H1 (cell line): ENCODE measurements at regions of chr4 and their contacts with region 1.

Region 1: GRCh38 chr4:104860238-104861123 is 286.2 kb upstream of the TET2 start:
- DNase-seq: peak; percentile 36 to 70
- H3K4me3 ChIP-seq: no peak overlapping the region
- H3K27ac ChIP-seq: no peak overlapping the region
- H3K4me1 ChIP-seq: peaks cover 0 to 4% (median 0%) of the 10 kb centered on the region in 4 experiments; a peak in 2 of 7 replicates
- H3K27me3 ChIP-seq: no peaks in the 10 kb centered on the region
- CTCF ChIP-seq: peak in 2 of 3 experiments; percentile 67 to 83; a peak in 3 of 4 replicates
- EP300 ChIP-seq: no peak
- POLR2A ChIP-seq: no peak
- RAD21 ChIP-seq: peak; percentile 92 to 94

Region 2: DNA sequence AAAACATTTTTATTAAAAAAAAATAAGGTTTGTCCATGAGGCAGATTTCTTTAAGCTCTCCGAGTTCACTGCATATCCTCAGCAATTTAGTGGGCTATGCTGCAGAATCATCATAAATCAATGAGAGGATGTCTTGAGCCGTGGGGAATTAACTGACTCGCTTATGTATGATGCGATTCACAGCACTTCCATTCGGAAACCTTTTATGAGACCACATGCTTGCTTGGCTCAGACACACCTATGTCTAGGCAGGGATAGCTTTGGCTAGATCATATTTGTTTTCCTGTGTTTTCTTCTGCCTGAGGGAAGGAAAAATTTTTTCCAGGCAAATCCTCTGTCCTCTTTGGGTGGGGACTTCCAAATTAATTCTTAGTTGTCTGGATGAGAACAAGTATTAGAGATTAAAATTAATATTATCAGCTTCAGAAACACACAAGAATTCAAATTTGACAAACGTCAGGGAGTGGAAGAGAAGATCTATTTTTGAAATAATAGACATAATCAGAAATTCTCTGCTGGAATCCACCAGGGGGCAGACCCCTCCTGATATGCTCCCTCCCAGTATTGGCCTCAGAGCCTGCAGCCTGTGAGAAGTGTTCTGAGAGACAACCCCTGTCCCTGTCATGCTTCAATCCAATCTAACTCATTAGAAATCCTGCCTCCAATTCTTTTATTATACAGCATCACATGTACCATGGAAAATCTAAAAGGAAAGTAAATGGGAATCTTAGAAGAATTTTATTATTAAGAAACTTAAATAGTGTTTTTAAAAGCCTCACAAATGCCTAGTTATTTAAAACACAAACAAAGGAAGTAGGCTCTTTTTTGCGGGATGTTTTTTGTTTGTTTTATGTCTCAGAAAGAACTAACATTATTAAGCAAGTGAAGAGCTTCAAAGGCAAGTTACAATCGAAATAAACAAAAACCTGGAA is 795.6 kb before region 1 on chr4:
- CTCF ChIA-PET with region 1: interaction called, 28 read pairs
- POLR2A ChIA-PET with region 1: no interaction called
- DNase-seq: peak; percentile 3 to 53
- H3K4me3 ChIP-seq: no peak overlapping the region
- H3K27ac ChIP-seq: no peak overlapping the region
- H3K4me1 ChIP-seq: no peaks in the 10 kb centered on the region
- H3K27me3 ChIP-seq: no peaks in the 10 kb centered on the region
- CTCF ChIP-seq: peak; percentile 44 to 59 (median 57)
- EP300 ChIP-seq: no peak
- POLR2A ChIP-seq: no peak
- RAD21 ChIP-seq: peak; percentile 82 to 83

Region 3: GRCh38 chr4:104500442-104500841 is 360.0 kb before region 1 on chr4:
- CTCF ChIA-PET with region 1: interaction called, 10 read pairs
- POLR2A ChIA-PET with region 1: no interaction called
- DNase-seq: no peak
- H3K4me3 ChIP-seq: no peak overlapping the region
- H3K27ac ChIP-seq: no peak overlapping the region
- H3K4me1 ChIP-seq: no peaks in the 10 kb centered on the region
- H3K27me3 ChIP-seq: no peaks in the 10 kb centered on the region
- CTCF ChIP-seq: no peak
- EP300 ChIP-seq: no peak
- POLR2A ChIP-seq: no peak
- RAD21 ChIP-seq: no peak

Region 4: DNA sequence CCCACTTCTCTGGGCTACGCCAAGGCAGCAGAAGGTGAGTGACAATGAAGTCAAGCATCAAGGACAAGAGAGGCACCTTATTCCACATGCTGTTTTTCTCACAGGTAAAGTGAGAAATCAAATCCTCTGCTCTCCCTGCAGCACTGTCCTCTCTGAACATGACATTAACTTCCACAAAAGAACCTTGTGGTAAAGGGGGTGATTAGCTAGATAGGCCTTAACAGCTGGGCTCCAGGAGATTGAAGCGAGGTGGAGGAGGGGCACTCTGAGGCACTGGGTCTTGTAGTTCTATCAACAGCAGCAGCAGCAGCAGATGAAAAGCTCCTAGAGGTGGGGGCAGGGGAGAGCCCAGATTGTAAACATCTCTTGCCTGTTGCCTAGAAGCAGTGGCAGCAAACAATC is 269.0 kb before region 1 on chr4:
- CTCF ChIA-PET with region 1: interaction called, 13 read pairs
- POLR2A ChIA-PET with region 1: no interaction called
- DNase-seq: peak; percentile 56 to 62
- H3K4me3 ChIP-seq: peak overlapping the region in 1 of 4 experiments; percentile 27; a peak in 1 of 8 replicates
- H3K27ac ChIP-seq: peak overlapping the region; percentile 54
- H3K4me1 ChIP-seq: peaks cover 0 to 3% (median 2%) of the 10 kb centered on the region in 4 experiments; a peak in 4 of 7 replicates
- H3K27me3 ChIP-seq: no peaks in the 10 kb centered on the region
- CTCF ChIP-seq: no peak
- EP300 ChIP-seq: peak in 1 of 2 experiments; percentile 70; a peak in 1 of 3 replicates
- POLR2A ChIP-seq: no peak
- RAD21 ChIP-seq: peak; percentile 19 to 21; a peak in 2 of 4 replicates

Region 5: DNA sequence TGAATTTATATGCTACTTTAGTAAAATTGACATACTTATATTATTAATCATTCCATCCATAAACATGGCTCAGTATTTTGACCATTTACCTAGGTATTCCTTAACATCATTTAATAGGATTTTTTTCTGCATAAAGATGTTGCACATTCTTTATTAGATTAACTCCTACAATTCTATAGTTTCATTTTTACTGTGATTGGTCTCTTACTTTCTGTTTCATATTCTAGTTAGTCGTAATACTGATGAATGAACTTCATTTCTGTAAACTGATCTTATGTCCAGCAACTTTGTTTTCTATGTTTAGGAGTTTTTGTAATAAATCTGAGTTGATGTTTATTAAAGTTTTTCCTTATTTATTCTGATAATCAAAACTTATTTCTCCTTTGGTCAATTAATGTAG is 87.6 kb before region 1 on chr4:
- CTCF ChIA-PET with region 1: no interaction called
- POLR2A ChIA-PET with region 1: no interaction called
- DNase-seq: no peak
- H3K4me3 ChIP-seq: no peak overlapping the region
- H3K27ac ChIP-seq: no peak overlapping the region
- H3K4me1 ChIP-seq: no peaks in the 10 kb centered on the region
- H3K27me3 ChIP-seq: no peaks in the 10 kb centered on the region; a peak in 1 of 7 replicates
- CTCF ChIP-seq: no peak
- EP300 ChIP-seq: no peak
- POLR2A ChIP-seq: no peak
- RAD21 ChIP-seq: no peak

Region 6: DNA sequence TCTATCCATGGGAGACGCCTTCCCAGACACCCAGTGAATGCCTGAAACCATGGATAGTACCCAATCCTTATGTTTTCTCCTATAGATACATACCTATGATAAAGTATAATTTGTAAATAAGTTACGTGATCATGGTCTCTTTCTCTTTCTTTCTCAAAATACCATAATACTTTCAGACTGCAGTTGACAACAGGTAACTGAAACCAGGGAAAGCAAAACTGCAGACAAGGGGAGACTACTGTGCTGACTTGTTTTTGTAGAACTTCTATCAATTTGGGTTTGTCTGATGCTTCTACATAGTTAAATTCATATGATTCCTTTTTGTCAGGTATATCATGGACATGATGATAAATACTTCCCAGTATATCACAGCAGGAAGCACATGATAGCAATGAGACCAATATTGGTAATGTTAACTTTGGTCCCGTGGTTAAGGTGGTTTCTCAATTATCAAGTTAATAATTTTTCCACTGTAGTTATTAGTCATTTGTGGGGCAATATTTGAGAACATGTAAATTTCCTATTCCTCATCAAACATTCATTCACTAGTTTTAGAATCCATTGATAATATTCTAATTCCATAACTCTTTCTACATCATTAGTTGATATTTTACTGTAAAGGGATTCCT is 11.8 kb before region 1 on chr4:
- CTCF ChIA-PET with region 1: interaction called, 77 read pairs
- POLR2A ChIA-PET with region 1: interaction called, 3 read pairs
- DNase-seq: no peak
- H3K4me3 ChIP-seq: no peak overlapping the region
- H3K27ac ChIP-seq: no peak overlapping the region
- H3K4me1 ChIP-seq: no peaks in the 10 kb centered on the region; a peak in 1 of 7 replicates
- H3K27me3 ChIP-seq: no peaks in the 10 kb centered on the region
- CTCF ChIP-seq: no peak
- EP300 ChIP-seq: no peak
- POLR2A ChIP-seq: no peak
- RAD21 ChIP-seq: no peak

Region 7: GRCh38 chr4:104901438-104901837 is 41.0 kb after region 1 on chr4:
- CTCF ChIA-PET with region 1: interaction called, 12 read pairs
- POLR2A ChIA-PET with region 1: no interaction called
- DNase-seq: peak in 1 of 2 experiments; percentile 1
- H3K4me3 ChIP-seq: no peak overlapping the region
- H3K27ac ChIP-seq: no peak overlapping the region
- H3K4me1 ChIP-seq: peaks cover 0 to 2% (median 0%) of the 10 kb centered on the region in 4 experiments; a peak in 1 of 7 replicates
- H3K27me3 ChIP-seq: peaks cover 0 to 10% (median 2%) of the 10 kb centered on the region in 4 experiments; a peak in 3 of 7 replicates
- CTCF ChIP-seq: peak in 1 of 3 experiments; percentile 34; a peak in 2 of 4 replicates
- EP300 ChIP-seq: no peak
- POLR2A ChIP-seq: no peak
- RAD21 ChIP-seq: peak; percentile 28 to 54; a peak in 3 of 4 replicates